ENCODE measurements at regions of chr12 and their contacts with region 1.

Region 1: GRCh38 chr12:77571127-77571526 is 259.6 kb upstream of the NAV3 start:
- DNase-seq: no peak
- ATAC-seq: no peak
- H3K4me3 ChIP-seq: no peak overlapping the region
- H3K27ac ChIP-seq: no peak overlapping the region
- H3K4me1 ChIP-seq: no peaks in the 10 kb centered on the region
- H3K27me3 ChIP-seq: no peaks in the 10 kb centered on the region
- CTCF ChIP-seq: no peak
- POLR2A ChIP-seq: no peak

Region 2: GRCh38 chr12:77328326-77328725 is 242.8 kb before region 1 on chr12:
- intact Hi-C with region 1: no loop called
- DNase-seq: no peak
- ATAC-seq: no peak
- H3K4me3 ChIP-seq: no peak overlapping the region
- H3K27ac ChIP-seq: no peak overlapping the region
- H3K4me1 ChIP-seq: peaks cover 0 to 14% (median 5%) of the 10 kb centered on the region in 12 donors
- H3K27me3 ChIP-seq: peaks cover 0 to 17% (median 0%) of the 10 kb centered on the region in 9 donors
- CTCF ChIP-seq: no peak
- POLR2A ChIP-seq: no peak

Region 3: DNA sequence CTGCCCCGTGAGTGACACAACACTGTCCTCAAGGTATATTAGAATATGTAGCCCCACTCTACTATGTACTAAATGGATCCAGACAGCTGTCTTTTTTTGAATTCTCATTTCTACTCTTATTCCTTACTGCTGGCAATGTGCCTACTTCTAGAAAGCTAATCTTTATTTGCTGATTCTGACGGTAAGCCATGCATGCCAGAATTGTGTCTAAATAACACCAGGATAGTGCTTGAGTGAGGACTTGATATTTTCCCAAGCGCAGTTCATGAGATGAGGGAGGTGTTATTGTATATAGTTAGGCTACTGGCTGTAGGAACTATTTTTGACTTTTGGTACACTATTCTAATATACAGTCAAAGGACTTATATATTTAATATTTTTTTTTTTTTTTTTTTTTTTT is 56.6 kb before region 1 on chr12:
- intact Hi-C with region 1: no loop called
- DNase-seq: no peak
- ATAC-seq: no peak
- H3K4me3 ChIP-seq: no peak overlapping the region
- H3K27ac ChIP-seq: no peak overlapping the region
- H3K4me1 ChIP-seq: no peaks in the 10 kb centered on the region
- H3K27me3 ChIP-seq: no peaks in the 10 kb centered on the region
- CTCF ChIP-seq: no peak
- POLR2A ChIP-seq: no peak

Region 4: GRCh38 chr12:77537648-77538047 is 33.5 kb before region 1 on chr12:
- intact Hi-C with region 1: no loop called
- DNase-seq: no peak
- ATAC-seq: no peak
- H3K4me3 ChIP-seq: no peak overlapping the region
- H3K27ac ChIP-seq: no peak overlapping the region
- H3K4me1 ChIP-seq: no peaks in the 10 kb centered on the region
- H3K27me3 ChIP-seq: no peaks in the 10 kb centered on the region
- CTCF ChIP-seq: no peak
- POLR2A ChIP-seq: no peak

Region 5: GRCh38 chr12:77603946-77604345 is 32.8 kb after region 1 on chr12:
- intact Hi-C with region 1: loop called in 1 of 10 experiments (anchors 2 kb)
- DNase-seq: no peak
- ATAC-seq: no peak
- H3K4me3 ChIP-seq: no peak overlapping the region
- H3K27ac ChIP-seq: no peak overlapping the region
- H3K4me1 ChIP-seq: peaks cover 0 to 4% (median 0%) of the 10 kb centered on the region in 12 donors
- H3K27me3 ChIP-seq: no peaks in the 10 kb centered on the region
- CTCF ChIP-seq: no peak
- POLR2A ChIP-seq: no peak

Measured in heart left ventricle (tissue), 16 donors.